Left ventricle myocardium inferior (tissue), 1 donor: ENCODE measurements at regions of chr16 and their contacts with region 1.

Region 1: DNA sequence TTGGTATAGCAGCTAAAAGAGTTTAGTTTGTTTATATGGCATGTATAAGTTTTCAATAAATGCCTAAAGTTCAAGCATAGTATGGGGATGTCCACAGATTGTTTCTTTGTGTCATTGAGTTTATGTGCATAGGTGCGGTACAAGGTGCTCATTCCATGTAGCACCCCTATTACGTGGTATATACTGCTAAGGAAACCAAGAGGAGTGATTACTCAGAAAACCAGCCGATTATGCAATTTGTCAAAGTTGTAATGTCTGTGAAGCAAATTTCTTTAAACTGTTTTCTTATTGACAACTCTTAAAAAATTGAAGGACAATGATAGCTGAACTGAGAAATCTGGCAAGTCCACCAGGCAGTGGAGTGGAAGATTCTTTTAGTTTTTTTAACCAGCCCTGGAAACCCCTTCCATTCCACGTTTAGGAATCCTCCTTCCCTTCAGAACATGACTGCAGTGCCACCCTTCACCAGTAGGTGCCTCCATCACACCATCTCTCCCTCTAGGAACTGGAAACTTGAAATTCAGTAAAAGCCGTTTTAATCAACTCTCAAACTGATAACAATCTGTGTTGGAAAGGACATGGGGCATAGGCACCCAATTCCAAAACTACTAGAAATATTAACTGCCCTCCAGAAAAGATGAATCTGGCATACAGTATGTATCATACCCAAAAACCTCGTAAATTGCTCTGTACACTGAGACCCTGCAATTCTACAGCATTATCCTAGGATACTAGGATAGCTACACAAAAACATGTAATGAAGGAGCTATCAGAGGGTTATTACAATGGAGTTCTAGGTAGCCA is 43.5 kb downstream of the REXO5 start:
- DNase-seq: peak; percentile 73
- H3K4me3 ChIP-seq: no peak overlapping the region
- H3K27ac ChIP-seq: peak overlapping the region; percentile 92
- H3K4me1 ChIP-seq: peaks cover 63% of the 10 kb centered on the region
- H3K27me3 ChIP-seq: no peaks in the 10 kb centered on the region
- CTCF ChIP-seq: peak; percentile 99

Region 2: DNA sequence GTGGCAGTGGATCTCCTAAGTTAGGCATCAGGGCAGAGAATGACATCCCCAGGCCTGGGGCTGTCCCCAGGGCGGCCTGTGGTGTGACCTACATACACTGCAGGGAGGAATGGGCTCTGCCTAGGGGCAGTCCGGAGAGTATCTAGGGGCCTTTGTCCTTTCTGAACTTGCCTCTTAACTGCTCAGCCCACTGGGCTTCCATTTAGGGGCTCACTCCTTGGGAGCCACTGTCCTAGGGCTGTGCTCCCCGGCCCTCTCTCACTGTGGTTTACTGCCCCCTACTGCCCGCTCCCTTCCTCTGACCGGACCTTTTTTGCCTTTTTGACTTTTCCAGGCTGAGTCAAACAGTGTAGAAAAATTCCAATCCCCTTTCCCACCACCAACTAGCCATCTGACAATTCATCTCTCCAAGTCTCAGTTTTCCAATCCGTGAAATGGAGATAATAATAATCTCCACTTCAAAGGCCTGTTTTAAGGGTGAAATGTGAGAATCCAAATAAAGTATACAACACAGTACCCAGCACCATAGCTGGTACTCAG is 234.0 kb after region 1 on chr16:
- intact Hi-C with region 1: loop called (anchors 2 kb)
- DNase-seq: peak; percentile 64
- H3K4me3 ChIP-seq: no peak overlapping the region
- H3K27ac ChIP-seq: no peak overlapping the region
- H3K4me1 ChIP-seq: no peaks in the 10 kb centered on the region
- H3K27me3 ChIP-seq: no peaks in the 10 kb centered on the region
- CTCF ChIP-seq: peak; percentile 83